HCT116 (cell line): ENCODE measurements at regions of chr10 and their contacts with region 1.

Region 1: DNA sequence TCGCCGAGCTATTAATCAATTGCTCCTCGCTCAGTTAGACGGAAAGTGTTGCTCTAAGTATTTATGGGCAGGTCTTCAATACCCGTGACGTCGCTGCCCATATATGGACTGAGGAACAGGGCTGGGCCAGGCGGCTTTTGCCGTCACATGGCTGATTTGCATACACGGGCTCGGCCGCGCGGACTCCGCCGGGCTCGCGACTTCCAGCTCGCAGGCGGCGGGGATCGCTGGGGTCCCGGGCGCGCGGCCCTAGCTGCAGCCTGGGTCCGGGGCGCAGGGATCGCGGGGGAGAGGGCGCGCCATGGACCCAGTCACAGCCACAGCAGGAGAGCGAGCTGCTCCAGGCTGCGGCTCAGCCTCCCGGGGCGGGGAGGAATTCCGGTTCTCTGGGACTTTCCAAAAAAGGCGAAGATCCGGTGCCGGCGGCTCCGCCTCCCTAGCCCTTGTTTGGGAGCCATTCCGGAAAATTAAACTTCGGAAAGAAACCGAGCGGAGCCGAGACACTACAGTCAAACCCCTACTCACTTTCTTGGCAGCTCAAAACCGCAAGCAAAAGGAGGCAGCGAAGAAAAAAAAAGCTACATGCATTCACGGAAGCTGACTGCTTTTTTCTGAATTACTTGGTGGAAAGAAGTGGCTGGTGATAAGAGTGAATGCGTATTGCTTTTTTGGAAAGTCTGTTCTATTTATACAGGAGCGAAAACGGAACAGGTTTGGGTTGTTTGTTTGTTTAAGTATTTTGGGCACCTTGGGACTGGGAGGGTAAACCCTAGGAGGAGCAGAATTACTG is at the start of gene EGR2:
- DNase-seq: peak; percentile 89
- ATAC-seq: peak; percentile 84
- H3K4me3 ChIP-seq: peak within 1 kb of the TSS; percentile 59 to 62
- H3K27ac ChIP-seq: peak within 1 kb of the TSS; percentile 75; the same call in 1 of the 2 replicates
- H3K4me1 ChIP-seq: peaks cover 9 to 34% of the 10 kb centered on the region in 2 experiments
- H3K27me3 ChIP-seq: no peaks in the 10 kb centered on the region
- CTCF ChIP-seq: no peak
- POLR2A ChIP-seq: peak; percentile 22
- RAD21 ChIP-seq: no peak
- total RNA-seq, gene EGR2: 2.3 TPM

Region 2: DNA sequence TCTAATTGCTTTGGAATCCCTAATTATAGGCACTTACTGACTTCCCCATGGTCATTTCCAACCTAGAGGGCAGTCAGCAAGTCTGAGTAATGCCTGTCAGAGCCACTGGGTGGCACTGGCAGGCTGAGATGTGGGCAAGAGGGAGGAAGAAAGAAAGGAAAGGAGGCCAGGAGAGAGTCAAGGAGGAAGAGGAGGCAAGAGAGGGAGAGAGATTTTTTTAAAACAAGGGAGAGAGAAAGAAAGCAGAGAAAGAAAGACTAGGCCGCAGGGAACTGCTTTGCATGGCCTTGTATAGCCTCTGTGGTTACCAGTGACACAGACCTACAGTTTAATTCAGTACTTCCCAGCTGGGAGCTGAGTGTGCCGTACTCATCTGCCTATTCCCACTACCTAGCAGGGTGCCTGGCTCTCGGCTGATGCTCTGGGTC is 222.4 kb before region 1 on chr10:
- CTCF ChIA-PET with region 1: interaction called, 5 read pairs
- POLR2A ChIA-PET with region 1: no interaction called
- RAD21 ChIA-PET with region 1: interaction called, 3 to 5 read pairs
- intact Hi-C with region 1: loop called (anchors 5 kb)
- DNase-seq: peak; percentile 53
- ATAC-seq: peak; percentile 97
- H3K4me3 ChIP-seq: no peak overlapping the region
- H3K27ac ChIP-seq: no peak overlapping the region
- H3K4me1 ChIP-seq: no peaks in the 10 kb centered on the region
- H3K27me3 ChIP-seq: no peaks in the 10 kb centered on the region
- CTCF ChIP-seq: peak; percentile 87 to 96 (median 89)
- POLR2A ChIP-seq: no peak
- RAD21 ChIP-seq: peak; percentile 92

Region 3: DNA sequence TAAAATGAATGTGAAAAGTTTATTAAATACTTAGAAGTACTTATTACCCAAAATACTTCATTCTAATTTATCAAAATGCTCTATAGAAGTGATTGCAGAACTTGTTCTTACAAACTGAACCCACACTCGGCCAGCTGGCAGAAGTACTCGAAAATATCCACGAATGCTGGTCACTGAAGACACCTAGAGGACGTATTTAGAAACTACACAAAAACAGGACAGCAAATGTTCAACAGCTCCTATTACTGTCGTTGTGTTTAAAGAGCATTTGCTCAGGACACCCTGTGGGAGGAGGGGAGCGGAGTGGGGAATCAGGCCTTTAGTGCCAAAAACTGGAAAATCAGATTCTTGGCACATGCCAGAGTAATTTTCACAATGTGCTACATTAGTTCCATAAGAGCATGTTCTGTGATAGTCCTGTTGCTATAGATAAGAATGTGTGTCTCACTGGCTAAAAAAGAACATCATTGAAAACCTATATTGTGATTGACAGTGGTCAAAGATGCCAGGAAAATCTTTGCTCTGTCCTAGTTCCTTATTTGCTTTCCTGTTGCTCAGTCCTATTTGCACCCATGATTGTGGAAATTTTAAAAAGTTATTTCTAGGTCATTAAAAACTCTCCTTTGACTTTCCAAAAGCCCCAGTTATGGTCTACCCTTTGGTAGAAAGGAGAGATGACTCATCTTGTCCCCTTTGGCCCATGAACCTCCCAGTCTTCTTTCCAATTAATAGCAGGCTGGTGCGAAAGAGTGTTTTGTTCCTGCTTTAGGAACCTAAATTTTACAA is 267.6 kb after region 1 on chr10:
- CTCF ChIA-PET with region 1: interaction called, 7 read pairs
- POLR2A ChIA-PET with region 1: interaction called, 3 read pairs
- RAD21 ChIA-PET with region 1: interaction called in 1 of 2 experiments, 4 read pairs
- intact Hi-C with region 1: loop called (anchors 5 kb)
- DNase-seq: peak; percentile 71
- ATAC-seq: peak; percentile 94
- H3K4me3 ChIP-seq: no peak overlapping the region
- H3K27ac ChIP-seq: no peak overlapping the region
- H3K4me1 ChIP-seq: no peaks in the 10 kb centered on the region; a peak in 1 of 4 replicates
- H3K27me3 ChIP-seq: no peaks in the 10 kb centered on the region
- CTCF ChIP-seq: peak; percentile 48 to 75 (median 75)
- POLR2A ChIP-seq: no peak
- RAD21 ChIP-seq: peak; percentile 91

Region 4: GRCh38 chr10:63157845-63158624 is 341.5 kb after region 1 on chr10:
- CTCF ChIA-PET with region 1: interaction called, 18 read pairs
- POLR2A ChIA-PET with region 1: no interaction called
- RAD21 ChIA-PET with region 1: no interaction called
- intact Hi-C with region 1: loop called (anchors 1 kb)
- DNase-seq: peak; percentile 85
- ATAC-seq: peak; percentile 90
- H3K4me3 ChIP-seq: no peak overlapping the region
- H3K27ac ChIP-seq: no peak overlapping the region
- H3K4me1 ChIP-seq: no peaks in the 10 kb centered on the region
- H3K27me3 ChIP-seq: no peaks in the 10 kb centered on the region
- CTCF ChIP-seq: peak; percentile 71 to 84 (median 80)
- POLR2A ChIP-seq: no peak
- RAD21 ChIP-seq: peak; percentile 92